ENCODE measurements at regions of chr6 and their contacts with region 1.

Region 1: GRCh38 chr6:55239099-55239498 is 64.8 kb downstream of the HCRTR2 start:
- DNase-seq: no peak
- ATAC-seq: no peak
- H3K4me3 ChIP-seq: no peak overlapping the region
- H3K27ac ChIP-seq: no peak overlapping the region
- H3K4me1 ChIP-seq: no peaks in the 10 kb centered on the region
- H3K27me3 ChIP-seq: peaks cover 7% of the 10 kb centered on the region
- CTCF ChIP-seq: no peak

Region 2: GRCh38 chr6:53986165-53986720 is 1252.9 kb before region 1 on chr6:
- CTCF ChIA-PET with region 1: no interaction called
- POLR2A ChIA-PET with region 1: no interaction called
- in situ Hi-C with region 1: no loop called
- intact Hi-C with region 1: loop called (anchors 2 kb)
- DNase-seq: peak; percentile 39
- ATAC-seq: peak; percentile 76; the same call in 1 of the 2 replicates
- H3K4me3 ChIP-seq: no peak overlapping the region
- H3K27ac ChIP-seq: no peak overlapping the region
- H3K4me1 ChIP-seq: no peaks in the 10 kb centered on the region
- H3K27me3 ChIP-seq: 0 out of 2 replicates have a peak, but pooled peaks cover 4% of the 10 kb centered on the region
- CTCF ChIP-seq: peak; percentile 83; the same call in 1 of the 2 replicates

Region 3: GRCh38 chr6:54073487-54073886 is 1165.6 kb before region 1 on chr6:
- CTCF ChIA-PET with region 1: interaction called, 10 read pairs
- POLR2A ChIA-PET with region 1: no interaction called
- in situ Hi-C with region 1: no loop called
- intact Hi-C with region 1: no loop called
- DNase-seq: no peak
- ATAC-seq: no peak
- H3K4me3 ChIP-seq: no peak overlapping the region
- H3K27ac ChIP-seq: no peak overlapping the region
- H3K4me1 ChIP-seq: no peaks in the 10 kb centered on the region
- H3K27me3 ChIP-seq: no peaks in the 10 kb centered on the region
- CTCF ChIP-seq: no peak

Region 4: GRCh38 chr6:54419885-54420284 is 819.2 kb before region 1 on chr6:
- CTCF ChIA-PET with region 1: no interaction called
- POLR2A ChIA-PET with region 1: no interaction called
- in situ Hi-C with region 1: no loop called
- intact Hi-C with region 1: loop called (anchors 10 kb)
- DNase-seq: peak; percentile 17
- ATAC-seq: no peak
- H3K4me3 ChIP-seq: no peak overlapping the region
- H3K27ac ChIP-seq: no peak overlapping the region
- H3K4me1 ChIP-seq: no peaks in the 10 kb centered on the region
- H3K27me3 ChIP-seq: no peaks in the 10 kb centered on the region
- CTCF ChIP-seq: no peak

Region 5: DNA sequence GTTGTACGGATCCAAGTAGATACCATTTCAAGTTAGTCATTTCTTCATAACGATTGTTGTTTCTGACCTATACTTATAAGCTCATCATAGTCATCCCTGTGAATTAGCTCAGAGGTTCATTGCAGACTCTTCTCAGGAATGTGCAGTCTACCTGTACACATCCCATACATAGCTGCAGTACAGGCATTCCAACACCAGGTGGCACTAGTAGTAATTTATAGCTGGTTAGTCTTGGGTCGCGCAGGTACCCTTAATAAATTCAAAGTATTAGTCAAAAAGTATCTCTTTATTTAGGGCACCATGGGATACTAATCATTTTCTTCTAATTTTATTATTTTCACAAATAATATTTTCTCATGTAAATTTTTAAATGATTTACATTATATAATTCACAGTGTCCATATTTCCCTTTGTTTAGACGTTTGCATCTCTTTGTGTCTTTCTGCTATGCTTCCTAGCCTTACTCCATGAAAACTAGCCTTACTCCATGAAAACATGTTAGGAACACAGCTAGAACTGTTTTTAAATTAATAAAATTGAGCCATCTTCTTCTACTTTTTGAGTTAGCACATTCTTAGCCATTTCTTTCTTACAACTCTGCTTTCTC is 521.1 kb before region 1 on chr6:
- CTCF ChIA-PET with region 1: no interaction called
- POLR2A ChIA-PET with region 1: no interaction called
- in situ Hi-C with region 1: no loop called
- intact Hi-C with region 1: loop called (anchors 2 kb)
- DNase-seq: peak; percentile 77
- ATAC-seq: peak; percentile 94
- H3K4me3 ChIP-seq: no peak overlapping the region
- H3K27ac ChIP-seq: no peak overlapping the region
- H3K4me1 ChIP-seq: no peaks in the 10 kb centered on the region
- H3K27me3 ChIP-seq: no peaks in the 10 kb centered on the region
- CTCF ChIP-seq: peak; percentile 93

Region 6: GRCh38 chr6:55299286-55299985 is 60.3 kb after region 1 on chr6:
- CTCF ChIA-PET with region 1: no interaction called
- POLR2A ChIA-PET with region 1: no interaction called
- in situ Hi-C with region 1: no loop called
- intact Hi-C with region 1: no loop called
- DNase-seq: no peak
- ATAC-seq: no peak
- H3K4me3 ChIP-seq: no peak overlapping the region
- H3K27ac ChIP-seq: no peak overlapping the region
- H3K4me1 ChIP-seq: no peaks in the 10 kb centered on the region
- H3K27me3 ChIP-seq: no peaks in the 10 kb centered on the region
- CTCF ChIP-seq: no peak

Region 7: GRCh38 chr6:56193846-56194245 is 954.7 kb after region 1 on chr6:
- CTCF ChIA-PET with region 1: no interaction called
- POLR2A ChIA-PET with region 1: no interaction called
- in situ Hi-C with region 1: no loop called
- intact Hi-C with region 1: no loop called
- DNase-seq: no peak
- ATAC-seq: no peak
- H3K4me3 ChIP-seq: no peak overlapping the region
- H3K27ac ChIP-seq: no peak overlapping the region
- H3K4me1 ChIP-seq: no peaks in the 10 kb centered on the region
- H3K27me3 ChIP-seq: no peaks in the 10 kb centered on the region
- CTCF ChIP-seq: no peak

Measured in Panc1 (cell line).